ENCODE measurements at regions of chr4 and their contacts with region 1.

Region 1: DNA sequence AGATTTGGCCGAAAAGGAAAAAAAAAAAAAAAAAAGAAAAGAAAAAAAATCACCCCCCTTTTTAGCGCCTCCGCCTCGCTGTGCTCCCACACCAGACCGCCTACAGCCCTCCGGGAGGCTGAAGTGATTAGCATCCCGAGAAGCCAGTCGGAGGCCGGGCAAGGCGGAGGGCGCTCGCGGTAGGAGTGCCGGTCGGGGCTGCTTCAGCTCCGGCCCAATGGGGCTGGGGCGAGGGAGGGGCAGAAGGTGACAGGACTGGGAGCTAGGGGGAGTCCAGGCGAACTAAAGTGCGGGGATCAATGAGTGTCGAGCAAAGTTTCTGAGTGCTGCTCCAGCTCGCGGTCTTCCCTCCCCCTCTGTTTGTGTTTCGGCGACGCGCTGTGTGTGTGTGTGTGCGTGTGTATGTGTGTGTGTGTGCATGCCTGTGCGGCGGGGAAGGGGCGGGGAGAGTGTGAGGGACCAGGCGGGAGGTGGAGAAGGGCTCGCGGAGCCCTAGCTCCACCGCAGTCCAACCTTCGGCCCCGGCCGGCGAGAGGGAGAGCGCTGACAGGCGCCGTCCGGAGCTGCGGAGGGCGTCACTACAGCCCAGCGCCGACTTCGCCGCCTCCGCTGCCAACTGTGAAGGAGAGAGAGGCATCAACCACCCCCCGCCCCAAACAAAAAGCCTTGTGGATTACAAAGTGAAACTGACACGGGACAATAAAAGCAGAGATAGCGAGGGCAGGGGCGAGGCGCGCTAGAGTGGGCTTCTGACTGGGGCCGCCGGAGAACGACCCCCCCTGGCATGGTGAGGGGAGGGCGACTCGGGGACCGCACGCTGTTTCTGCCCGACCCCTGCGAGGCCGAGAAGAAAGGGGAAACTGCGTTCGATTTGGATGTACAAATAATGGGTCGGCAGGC is at the start of gene FAT4:
- DNase-seq: peak; percentile 96 to 97
- ATAC-seq: peak; percentile 92 to 97 (median 94)
- H3K4me3 ChIP-seq: peak within 1 kb of the TSS; percentile 83 to 97 (median 92)
- H3K27ac ChIP-seq: peak within 1 kb of the TSS; percentile 76 to 97 (median 94)
- H3K4me1 ChIP-seq: peaks cover 0 to 50% (median 30%) of the 10 kb centered on the region in 9 donors
- H3K27me3 ChIP-seq: peaks cover 0 to 55% (median 0%) of the 10 kb centered on the region in 7 donors
- CTCF ChIP-seq: peak in 5 of 9 donors; percentile 15 to 59 (median 59)
- total RNA-seq, gene FAT4: 5.4 to 16.5 (median 11.6) TPM

Region 2: GRCh38 chr4:125432104-125432503 is 117.2 kb after region 1 on chr4:
- intact Hi-C with region 1: loop called in 9 of 10 experiments (anchors 2 to 10 kb)
- DNase-seq: no peak
- ATAC-seq: peak in 6 of 8 donors; percentile 75 to 89 (median 80)
- H3K4me3 ChIP-seq: no peak overlapping the region
- H3K27ac ChIP-seq: peak overlapping the region in 1 of 10 donors; percentile 27
- H3K4me1 ChIP-seq: peaks cover 0 to 22% (median 10%) of the 10 kb centered on the region in 9 donors
- H3K27me3 ChIP-seq: no peaks in the 10 kb centered on the region
- CTCF ChIP-seq: peak in 8 of 9 donors; percentile 18 to 54 (median 41)

Region 3: DNA sequence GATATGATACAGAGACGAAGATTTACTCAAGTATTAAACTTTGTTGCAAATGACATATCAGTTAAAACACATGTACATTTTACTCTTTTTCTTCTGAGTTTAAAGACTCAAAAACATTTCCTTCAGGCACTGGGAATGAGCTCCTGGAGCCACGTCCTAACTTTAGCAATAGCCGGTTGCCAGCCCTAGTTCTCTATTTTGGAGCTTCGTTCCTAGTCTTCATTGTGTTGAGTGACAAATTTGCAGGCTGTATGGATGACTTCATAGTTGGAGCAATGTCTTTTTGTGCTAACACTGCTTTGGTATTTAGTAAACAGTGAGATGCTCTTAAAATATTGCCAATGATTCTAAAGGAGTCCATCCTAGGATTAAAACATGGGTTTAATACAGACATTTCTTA is 190.7 kb after region 1 on chr4:
- intact Hi-C with region 1: loop called in 1 of 10 experiments (anchors 10 kb)
- DNase-seq: no peak
- ATAC-seq: peak in 4 of 8 donors; percentile 49 to 73 (median 60)
- H3K4me3 ChIP-seq: no peak overlapping the region
- H3K27ac ChIP-seq: no peak overlapping the region
- H3K4me1 ChIP-seq: peaks cover 0 to 9% (median 0%) of the 10 kb centered on the region in 9 donors
- H3K27me3 ChIP-seq: no peaks in the 10 kb centered on the region
- CTCF ChIP-seq: no peak

Region 4: GRCh38 chr4:125626946-125627345 is 312.0 kb after region 1 on chr4:
- intact Hi-C with region 1: loop called in 2 of 10 experiments (anchors 5 to 10 kb)
- DNase-seq: no peak
- ATAC-seq: no peak
- H3K4me3 ChIP-seq: no peak overlapping the region
- H3K27ac ChIP-seq: no peak overlapping the region
- H3K4me1 ChIP-seq: peaks cover 0 to 10% (median 0%) of the 10 kb centered on the region in 9 donors
- H3K27me3 ChIP-seq: no peaks in the 10 kb centered on the region
- CTCF ChIP-seq: no peak

Region 5: GRCh38 chr4:125750828-125751466 is 436.0 kb after region 1 on chr4:
- intact Hi-C with region 1: loop called in 7 of 10 experiments (anchors 2 to 5 kb)
- DNase-seq: peak in 1 of 2 donors; percentile 63
- ATAC-seq: peak; percentile 80 to 94 (median 88)
- H3K4me3 ChIP-seq: no peak overlapping the region
- H3K27ac ChIP-seq: no peak overlapping the region
- H3K4me1 ChIP-seq: peaks cover 0 to 10% (median 0%) of the 10 kb centered on the region in 9 donors
- H3K27me3 ChIP-seq: no peaks in the 10 kb centered on the region
- CTCF ChIP-seq: peak in 8 of 9 donors; percentile 33 to 72 (median 56)

Region 6: GRCh38 chr4:126604268-126604867 is 1289.4 kb after region 1 on chr4:
- intact Hi-C with region 1: loop called in 5 of 10 experiments (anchors 5 to 10 kb)
- DNase-seq: no peak
- ATAC-seq: no peak
- H3K4me3 ChIP-seq: no peak overlapping the region
- H3K27ac ChIP-seq: no peak overlapping the region
- H3K4me1 ChIP-seq: no peaks in the 10 kb centered on the region
- H3K27me3 ChIP-seq: no peaks in the 10 kb centered on the region
- CTCF ChIP-seq: peak; percentile 28 to 74 (median 67)

Measured in heart right ventricle (tissue), 16 donors.